PC-3 (cell line): ENCODE measurements at regions of chr12 and their contacts with region 1.

Region 1: DNA sequence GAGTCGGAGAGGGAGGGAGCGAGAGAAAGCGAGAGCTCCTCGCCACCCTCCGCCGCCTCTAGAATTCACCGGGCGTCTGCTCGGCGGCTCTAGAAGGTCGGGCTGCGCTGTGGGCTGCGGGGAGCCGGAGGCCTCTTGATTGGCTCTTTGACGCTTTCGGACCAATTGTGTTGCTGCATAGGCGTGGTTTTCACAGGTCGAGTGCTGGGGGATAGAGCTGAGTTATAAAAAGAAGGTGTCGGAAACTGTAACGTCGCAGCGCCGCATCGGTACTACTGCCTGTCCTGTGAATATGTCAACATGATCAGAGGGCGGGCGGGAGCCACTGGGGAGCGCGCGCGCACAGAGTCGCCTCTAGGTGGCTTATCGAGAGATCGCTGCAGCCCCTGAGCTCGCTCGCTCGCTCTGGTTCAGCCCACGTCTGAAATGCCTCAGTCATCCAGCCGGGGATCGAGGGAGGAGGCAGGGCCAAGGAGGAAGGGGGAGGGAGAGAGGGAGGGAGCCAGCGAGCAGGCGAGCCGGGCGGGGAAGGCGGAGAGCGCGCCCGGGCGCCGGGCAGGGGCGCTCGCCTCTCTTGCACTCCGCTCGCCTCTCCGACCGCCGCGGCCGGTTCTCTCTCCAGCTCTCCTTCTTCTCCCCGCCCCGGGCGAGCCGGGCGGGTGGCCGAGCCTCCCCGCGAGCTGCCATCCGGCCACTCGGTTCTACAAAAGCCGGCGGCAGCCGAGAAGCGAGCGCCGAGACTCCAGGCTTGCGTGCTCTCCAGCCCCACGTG is at the start of gene TBX3:
- DNase-seq: peak; percentile 99
- ATAC-seq: peak; percentile 82
- H3K4me3 ChIP-seq: peak within 1 kb of the TSS; percentile 94
- H3K27ac ChIP-seq: peak within 1 kb of the TSS; percentile 95
- H3K4me1 ChIP-seq: peaks cover 15% of the 10 kb centered on the region
- H3K27me3 ChIP-seq: no peaks in the 10 kb centered on the region
- CTCF ChIP-seq: peak; percentile 79
- total RNA-seq, gene TBX3: 89.4 and 123 TPM in 2 replicates

Region 2: GRCh38 chr12:114457620-114458019 is 226.7 kb before region 1 on chr12:
- CTCF ChIA-PET with region 1: no interaction called
- POLR2A ChIA-PET with region 1: no interaction called
- intact Hi-C with region 1: no loop called
- DNase-seq: no peak
- ATAC-seq: no peak
- H3K4me3 ChIP-seq: no peak overlapping the region
- H3K27ac ChIP-seq: no peak overlapping the region
- H3K4me1 ChIP-seq: no peaks in the 10 kb centered on the region
- H3K27me3 ChIP-seq: peaks cover 58% of the 10 kb centered on the region
- CTCF ChIP-seq: no peak

Region 3: GRCh38 chr12:114760151-114760877 is 76.0 kb after region 1 on chr12:
- CTCF ChIA-PET with region 1: interaction called, 4 read pairs
- POLR2A ChIA-PET with region 1: interaction called, 14 read pairs
- intact Hi-C with region 1: no loop called
- DNase-seq: peak; percentile 95
- ATAC-seq: peak; percentile 89
- H3K4me3 ChIP-seq: no peak overlapping the region
- H3K27ac ChIP-seq: peak overlapping the region; percentile 89
- H3K4me1 ChIP-seq: peaks cover 25% of the 10 kb centered on the region
- H3K27me3 ChIP-seq: no peaks in the 10 kb centered on the region
- CTCF ChIP-seq: no peak

Region 4: DNA sequence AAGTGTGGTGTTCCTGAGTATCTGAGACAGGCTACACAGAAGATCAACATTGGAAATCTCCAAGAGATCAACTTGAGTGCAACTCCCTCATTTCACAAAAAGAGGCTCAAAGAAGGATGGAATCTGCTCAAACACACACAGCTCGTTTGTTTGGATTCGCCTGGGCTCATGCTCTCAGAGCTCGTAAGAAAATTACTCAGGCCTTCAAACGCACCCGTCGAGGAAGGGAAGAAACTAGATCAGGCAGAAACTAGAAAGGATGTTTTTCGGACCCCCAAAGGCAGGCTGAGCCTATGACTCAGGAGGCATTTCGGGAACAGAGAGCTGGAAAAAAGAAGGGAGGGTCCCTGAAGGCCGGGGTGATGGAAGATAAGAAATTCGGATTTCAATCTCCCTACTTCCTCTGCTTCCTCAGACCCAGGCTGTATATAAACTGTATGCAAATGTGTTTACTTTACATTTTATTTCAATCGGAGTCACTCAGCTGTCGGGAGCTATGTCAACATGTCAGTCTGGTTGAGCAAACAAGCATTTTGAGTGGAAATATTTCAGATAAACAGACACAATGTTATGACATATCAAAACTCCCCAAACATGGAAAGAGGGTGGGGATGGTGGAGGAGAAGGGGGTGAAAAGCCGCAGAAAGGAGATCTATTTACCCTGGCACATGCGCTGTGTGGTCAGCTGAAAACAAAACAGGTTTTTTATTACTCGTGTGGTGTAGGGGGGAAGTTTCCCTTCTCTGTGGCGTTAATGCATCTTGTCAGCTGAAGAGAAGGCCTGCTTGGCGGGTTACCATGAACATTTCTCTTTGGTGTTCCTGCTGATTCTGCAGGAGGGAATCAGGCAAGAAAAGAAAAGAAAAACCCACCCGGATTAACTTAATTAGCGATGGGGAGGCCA is 128.8 kb after region 1 on chr12:
- CTCF ChIA-PET with region 1: interaction called, 3 read pairs
- POLR2A ChIA-PET with region 1: no interaction called
- intact Hi-C with region 1: loop called (anchors 2 kb)
- DNase-seq: peak; percentile 92
- ATAC-seq: peak; percentile 92
- H3K4me3 ChIP-seq: peak overlapping the region; percentile 55
- H3K27ac ChIP-seq: peak overlapping the region; percentile 66
- H3K4me1 ChIP-seq: peaks cover 8% of the 10 kb centered on the region
- H3K27me3 ChIP-seq: no peaks in the 10 kb centered on the region
- CTCF ChIP-seq: no peak

Region 5: GRCh38 chr12:114933428-114934168 is 249.3 kb after region 1 on chr12:
- CTCF ChIA-PET with region 1: interaction called, 7 read pairs
- POLR2A ChIA-PET with region 1: interaction called, 6 read pairs
- intact Hi-C with region 1: loop called (anchors 5 kb)
- DNase-seq: peak; percentile 98
- ATAC-seq: peak; percentile 96
- H3K4me3 ChIP-seq: peak overlapping the region; percentile 14; the same call in 1 of the 2 replicates
- H3K27ac ChIP-seq: peak overlapping the region; percentile 91
- H3K4me1 ChIP-seq: peaks cover 28% of the 10 kb centered on the region
- H3K27me3 ChIP-seq: no peaks in the 10 kb centered on the region
- CTCF ChIP-seq: no peak

Region 6: GRCh38 chr12:115017346-115017745 is 333.1 kb after region 1 on chr12:
- CTCF ChIA-PET with region 1: no interaction called
- POLR2A ChIA-PET with region 1: no interaction called
- intact Hi-C with region 1: no loop called
- DNase-seq: no peak
- ATAC-seq: no peak
- H3K4me3 ChIP-seq: no peak overlapping the region
- H3K27ac ChIP-seq: no peak overlapping the region
- H3K4me1 ChIP-seq: peaks cover 2% of the 10 kb centered on the region
- H3K27me3 ChIP-seq: no peaks in the 10 kb centered on the region
- CTCF ChIP-seq: no peak

Region 7: GRCh38 chr12:115060477-115061168 is 376.3 kb after region 1 on chr12:
- CTCF ChIA-PET with region 1: no interaction called
- POLR2A ChIA-PET with region 1: no interaction called
- intact Hi-C with region 1: loop called (anchors 1 kb)
- DNase-seq: peak; percentile 89
- ATAC-seq: peak; percentile 94
- H3K4me3 ChIP-seq: no peak overlapping the region
- H3K27ac ChIP-seq: peak overlapping the region; percentile 67
- H3K4me1 ChIP-seq: peaks cover 17% of the 10 kb centered on the region
- H3K27me3 ChIP-seq: no peaks in the 10 kb centered on the region
- CTCF ChIP-seq: no peak

Region 8: DNA sequence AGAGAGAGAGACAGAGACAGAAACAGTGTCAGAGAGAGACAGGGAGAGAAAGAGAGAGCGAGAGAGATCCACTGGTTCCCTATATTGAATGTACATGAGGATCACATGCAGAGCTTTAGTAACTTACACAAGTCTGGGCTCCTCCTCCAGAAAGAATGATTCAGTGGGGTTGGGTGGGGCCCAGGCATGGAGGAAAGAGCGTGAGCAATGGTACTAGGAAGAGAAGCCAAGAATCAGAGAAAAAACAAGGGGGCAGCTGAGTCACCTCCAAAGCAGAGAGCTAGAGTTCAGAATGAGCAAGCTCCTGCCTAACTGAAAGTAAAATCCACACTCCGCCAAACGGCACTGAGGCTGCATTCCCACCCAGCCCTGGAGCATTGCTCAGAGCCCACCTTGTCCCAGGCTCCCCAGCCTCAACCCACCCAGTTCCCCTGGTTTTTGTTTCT is 669.7 kb after region 1 on chr12:
- CTCF ChIA-PET with region 1: no interaction called
- POLR2A ChIA-PET with region 1: interaction called, 16 read pairs
- intact Hi-C with region 1: loop called (anchors 5 kb)
- DNase-seq: peak; percentile 98
- ATAC-seq: peak; percentile 94
- H3K4me3 ChIP-seq: peak overlapping the region; percentile 68
- H3K27ac ChIP-seq: peak overlapping the region; percentile 94
- H3K4me1 ChIP-seq: peaks cover 23% of the 10 kb centered on the region
- H3K27me3 ChIP-seq: no peaks in the 10 kb centered on the region
- CTCF ChIP-seq: no peak